ENCODE measurements at regions of chr19 and their contacts with region 1.

Region 1: DNA sequence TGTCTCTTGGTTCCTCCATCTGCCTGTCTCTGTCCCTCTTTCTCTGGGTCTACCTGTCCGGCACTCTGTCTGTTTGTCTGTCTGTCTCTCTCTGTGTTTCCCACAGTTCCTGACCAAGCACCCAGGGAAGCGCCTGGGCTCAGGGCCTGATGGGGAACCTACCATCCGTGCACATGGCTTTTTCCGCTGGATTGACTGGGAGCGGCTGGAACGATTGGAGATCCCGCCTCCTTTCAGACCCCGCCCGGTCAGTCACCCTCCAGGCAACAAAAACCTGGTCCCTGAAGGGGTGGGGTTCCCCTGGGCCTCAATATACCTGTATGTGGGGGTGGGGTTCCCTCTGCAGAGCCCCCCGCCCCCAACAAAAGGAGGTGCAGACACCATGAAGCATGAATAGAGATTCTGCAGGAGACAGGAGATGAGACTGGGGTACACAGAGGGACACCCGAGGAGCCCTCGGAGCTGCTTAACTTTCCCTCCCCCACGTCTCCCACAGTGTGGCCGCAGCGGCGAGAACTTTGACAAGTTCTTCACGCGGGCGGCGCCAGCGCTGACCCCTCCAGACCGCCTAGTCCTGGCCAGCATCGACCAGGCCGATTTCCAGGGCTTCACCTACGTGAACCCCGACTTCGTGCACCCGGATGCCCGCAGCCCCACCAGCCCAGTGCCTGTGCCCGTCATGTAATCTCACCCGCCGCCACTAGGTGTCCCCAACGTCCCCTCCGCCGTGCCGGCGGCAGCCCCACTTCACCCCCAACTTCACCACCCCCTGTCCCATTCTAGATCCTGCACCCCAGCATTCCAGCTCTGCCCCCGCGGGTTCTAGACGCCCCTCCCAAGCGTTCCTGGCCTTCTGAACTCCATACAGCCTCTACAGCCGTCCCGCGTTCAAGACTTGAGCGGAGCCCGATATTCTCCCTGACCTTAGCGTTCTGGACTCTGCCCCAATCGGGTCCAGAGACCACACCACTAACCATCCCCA is 2.6 kb upstream of the CACNG7 start:
- DNase-seq: no peak
- ATAC-seq: peak; percentile 67
- H3K4me3 ChIP-seq: no peak overlapping the region
- H3K27ac ChIP-seq: no peak overlapping the region
- H3K4me1 ChIP-seq: peaks cover 5% of the 10 kb centered on the region; the same call in 1 of the 2 replicates
- H3K27me3 ChIP-seq: peaks cover 30% of the 10 kb centered on the region
- CTCF ChIP-seq: peak; percentile 70
- POLR2A ChIP-seq: no peak
- RAD21 ChIP-seq: peak; percentile 58

Region 2: DNA sequence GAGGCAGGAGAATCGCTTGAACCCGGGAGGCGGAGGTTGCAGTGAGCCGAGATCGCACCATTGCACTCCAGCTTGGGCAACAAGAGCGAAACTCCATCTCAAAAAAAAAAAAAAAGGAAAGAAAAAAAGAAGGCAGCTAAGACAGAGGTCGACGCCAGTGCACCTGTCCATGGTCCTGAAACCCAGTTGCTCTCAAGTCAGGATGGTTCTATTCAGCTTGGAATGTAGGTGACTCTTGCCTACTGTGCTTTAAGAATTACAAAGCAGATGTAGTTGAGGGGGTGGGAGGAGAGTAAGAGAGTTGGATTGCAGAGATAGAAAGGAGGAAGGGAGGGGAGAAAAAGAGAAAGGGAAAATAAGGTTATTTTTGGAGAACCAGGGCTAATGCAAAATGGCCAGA is 21.2 kb after region 1 on chr19:
- CTCF ChIA-PET with region 1: no interaction called
- POLR2A ChIA-PET with region 1: no interaction called
- dilution Hi-C with region 1: no loop called
- in situ Hi-C with region 1: no loop called
- intact Hi-C with region 1: loop called (anchors 2 kb)
- DNase-seq: peak; percentile 64
- ATAC-seq: peak; percentile 75
- H3K4me3 ChIP-seq: no peak overlapping the region
- H3K27ac ChIP-seq: no peak overlapping the region
- H3K4me1 ChIP-seq: no peaks in the 10 kb centered on the region
- H3K27me3 ChIP-seq: no peaks in the 10 kb centered on the region
- CTCF ChIP-seq: no peak
- POLR2A ChIP-seq: no peak
- RAD21 ChIP-seq: no peak